HAP-1 (cell line): ENCODE measurements at regions of chr3 and their contacts with region 1.

Region 1: GRCh38 chr3:195748661-195749060 is 27.9 kb downstream of the MUC20 start:
- DNase-seq: no peak
- H3K4me3 ChIP-seq: no peak overlapping the region
- H3K4me1 ChIP-seq: peaks cover 3% of the 10 kb centered on the region
- H3K27me3 ChIP-seq: 0 out of 2 replicates have a peak, but pooled peaks cover 6% of the 10 kb centered on the region

Region 2: GRCh38 chr3:195849322-195850087 is 100.8 kb after region 1 on chr3:
- in situ Hi-C with region 1: loop called (anchors 10 kb)
- DNase-seq: no peak
- H3K4me3 ChIP-seq: no peak overlapping the region
- H3K4me1 ChIP-seq: no peaks in the 10 kb centered on the region
- H3K27me3 ChIP-seq: no peaks in the 10 kb centered on the region